ENCODE measurements at regions of chr5 and their contacts with region 1.

Region 1: DNA sequence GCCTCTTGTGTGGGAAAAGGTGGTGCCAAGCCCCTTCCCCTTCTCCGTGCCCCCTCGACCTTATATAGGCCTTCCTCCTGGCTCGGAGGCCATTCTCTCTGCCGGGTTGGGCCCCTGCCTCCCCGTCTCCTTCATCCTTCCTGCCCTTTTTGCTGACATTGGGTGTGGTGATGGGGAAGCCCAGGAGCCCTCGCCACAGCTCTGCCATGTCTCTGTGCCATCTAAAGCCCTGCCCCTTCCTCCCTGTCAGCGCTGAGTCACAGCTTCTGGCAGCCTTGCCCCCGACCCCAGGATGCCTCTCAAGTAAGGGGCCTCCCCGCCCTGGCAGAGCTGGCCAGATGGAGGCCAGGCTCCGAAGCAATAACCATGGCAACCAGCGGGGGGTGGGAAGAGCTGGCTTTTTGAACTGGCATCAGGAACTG is 30.4 kb downstream of the JADE2 start:
- DNase-seq: peak; percentile 98 to 100 (median 99)
- H3K4me3 ChIP-seq: no peak overlapping the region
- H3K27ac ChIP-seq: peak overlapping the region; percentile 71 to 78
- H3K4me1 ChIP-seq: peaks cover 0 to 35% (median 28%) of the 10 kb centered on the region in 4 experiments
- H3K27me3 ChIP-seq: no peaks in the 10 kb centered on the region

Region 2: GRCh38 chr5:134541736-134542376 is 14.0 kb before region 1 on chr5:
- CTCF ChIA-PET with region 1: interaction called, 32 read pairs
- POLR2A ChIA-PET with region 1: interaction called, 17 read pairs
- DNase-seq: no peak
- H3K4me3 ChIP-seq: no peak overlapping the region
- H3K27ac ChIP-seq: peak overlapping the region in 1 of 2 experiments; percentile 32
- H3K4me1 ChIP-seq: peaks cover 17 to 47% (median 42%) of the 10 kb centered on the region in 4 experiments
- H3K27me3 ChIP-seq: no peaks in the 10 kb centered on the region

Measured in common myeloid progenitor, CD34-positive (primary cell).